HEK293T (cell line): ENCODE measurements at regions of chr13 and their contacts with region 1.

Region 1: GRCh38 chr13:75694722-75695121 is 58.6 kb downstream of the LMO7 start:
- DNase-seq: no peak

Region 2: GRCh38 chr13:75600371-75600770 is 94.4 kb before region 1 on chr13:
- CTCF ChIA-PET with region 1: no interaction called
- POLR2A ChIA-PET with region 1: no interaction called
- DNase-seq: no peak

Region 3: GRCh38 chr13:75675421-75675820 is 19.3 kb before region 1 on chr13:
- CTCF ChIA-PET with region 1: interaction called, 34 read pairs
- POLR2A ChIA-PET with region 1: no interaction called
- DNase-seq: no peak

Region 4: DNA sequence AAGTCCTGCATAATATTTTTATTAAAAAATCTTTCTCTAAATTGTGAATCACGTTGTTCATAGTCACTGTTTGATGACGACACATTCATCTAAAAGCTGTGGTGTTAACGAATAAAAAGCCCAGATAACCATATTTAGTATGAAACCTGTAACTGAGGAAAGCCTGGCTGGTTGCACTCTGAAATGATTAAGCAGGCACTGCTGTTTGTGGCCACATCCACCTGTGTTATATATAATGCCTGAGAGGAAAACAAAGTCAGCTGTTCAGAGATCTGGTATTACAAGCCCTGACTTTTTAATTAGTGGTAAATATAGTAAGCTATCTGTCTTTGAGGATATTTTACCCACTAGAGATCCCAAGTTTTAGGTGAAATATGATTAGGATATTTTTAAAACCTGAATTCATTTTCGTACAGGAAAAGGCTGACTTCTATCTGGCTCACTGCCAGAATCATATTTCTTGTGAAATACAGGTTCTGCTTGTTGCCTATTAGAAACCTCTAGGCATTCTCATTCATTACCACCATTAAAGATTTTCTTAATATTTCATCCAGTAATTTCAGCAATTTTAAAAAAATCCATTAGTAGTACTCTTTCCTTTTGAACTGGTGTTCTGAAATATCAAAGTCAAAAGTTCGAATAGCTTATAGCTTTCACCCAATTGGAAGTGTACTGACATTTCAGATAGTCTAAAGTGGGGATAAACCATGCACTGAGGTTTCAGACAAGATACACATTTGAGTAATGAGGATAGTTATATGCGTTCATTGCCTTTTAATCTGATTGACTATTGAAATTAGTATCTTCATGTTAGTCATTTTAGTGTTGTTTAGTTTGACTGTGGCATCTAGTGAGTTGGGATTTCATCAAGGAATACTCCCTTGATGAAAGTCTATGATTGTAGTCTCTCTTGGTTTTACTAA is 21.1 kb after region 1 on chr13:
- CTCF ChIA-PET with region 1: interaction called, 14 read pairs
- POLR2A ChIA-PET with region 1: no interaction called
- DNase-seq: no peak

Region 5: GRCh38 chr13:75760131-75761021 is 65.7 kb after region 1 on chr13:
- CTCF ChIA-PET with region 1: interaction called, 14 read pairs
- POLR2A ChIA-PET with region 1: no interaction called
- DNase-seq: peak; percentile 60

Region 6: DNA sequence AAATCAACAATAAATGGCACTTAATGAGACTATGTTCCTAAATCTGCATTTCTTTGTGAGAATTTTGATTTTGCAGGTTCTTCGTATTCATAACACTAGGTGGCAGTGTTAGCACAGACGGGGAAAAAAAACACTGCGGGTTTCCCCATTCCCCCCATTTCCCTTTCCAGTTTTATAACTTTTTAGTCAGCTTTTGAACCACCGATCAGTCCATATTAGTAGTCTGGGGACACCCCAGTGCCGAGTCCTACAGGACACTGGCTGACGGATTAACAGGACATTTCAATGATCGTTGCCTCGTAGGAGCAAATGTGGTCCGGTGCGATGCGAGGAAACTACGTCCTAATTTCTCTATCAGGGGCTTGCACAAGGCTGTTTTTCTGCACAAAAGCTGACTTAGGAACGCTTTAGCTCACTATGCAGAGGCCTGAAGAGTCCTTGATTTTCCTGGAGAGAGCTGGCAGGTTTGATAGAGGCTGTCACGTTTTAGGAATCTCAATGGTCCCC is 175.7 kb after region 1 on chr13:
- CTCF ChIA-PET with region 1: interaction called, 26 read pairs
- POLR2A ChIA-PET with region 1: no interaction called
- DNase-seq: peak; percentile 70